AG04450 (cell line): ENCODE measurements at regions of chr13 and their contacts with region 1.

Region 1: GRCh38 chr13:113562085-113562749 is 22.3 kb upstream of the TFDP1 start:
- DNase-seq: peak; percentile 48
- H3K4me3 ChIP-seq: no peak overlapping the region
- H3K27ac ChIP-seq: no peak overlapping the region
- H3K27me3 ChIP-seq: peaks cover 19% of the 10 kb centered on the region
- CTCF ChIP-seq: peak; percentile 91

Region 2: DNA sequence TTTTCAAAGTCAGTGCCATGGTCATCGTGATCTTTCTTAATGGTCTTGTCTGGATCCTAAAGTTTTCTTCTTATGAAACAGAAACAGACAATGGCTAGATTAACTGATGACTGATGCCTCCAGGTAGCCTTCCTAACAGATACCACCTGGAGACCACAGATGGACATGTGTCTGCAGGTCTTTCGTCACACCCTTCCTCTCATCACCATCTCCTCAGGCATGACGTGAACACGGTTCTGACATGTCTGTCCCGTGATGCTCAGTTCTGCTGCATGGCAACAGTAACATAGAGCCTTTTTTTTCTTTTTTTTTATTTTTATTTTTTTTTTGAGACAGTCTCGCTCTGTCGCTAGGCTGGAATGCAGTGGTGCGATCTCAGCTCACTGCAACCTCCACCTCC is 278.3 kb before region 1 on chr13:
- CTCF ChIA-PET with region 1: no interaction called
- POLR2A ChIA-PET with region 1: no interaction called
- DNase-seq: no peak
- H3K4me3 ChIP-seq: no peak overlapping the region
- H3K27ac ChIP-seq: no peak overlapping the region
- H3K27me3 ChIP-seq: peaks cover 12% of the 10 kb centered on the region
- CTCF ChIP-seq: no peak

Region 3: GRCh38 chr13:113458253-113459065 is 103.8 kb before region 1 on chr13:
- CTCF ChIA-PET with region 1: interaction called, 54 read pairs
- POLR2A ChIA-PET with region 1: no interaction called
- DNase-seq: peak; percentile 13
- H3K4me3 ChIP-seq: no peak overlapping the region
- H3K27ac ChIP-seq: peak overlapping the region; percentile 47
- H3K27me3 ChIP-seq: no peaks in the 10 kb centered on the region
- CTCF ChIP-seq: peak; percentile 64

Region 4: GRCh38 chr13:113532156-113532806 is 29.9 kb before region 1 on chr13:
- CTCF ChIA-PET with region 1: interaction called, 10 read pairs
- POLR2A ChIA-PET with region 1: no interaction called
- DNase-seq: no peak
- H3K4me3 ChIP-seq: no peak overlapping the region
- H3K27ac ChIP-seq: peak overlapping the region; percentile 21
- H3K27me3 ChIP-seq: no peaks in the 10 kb centered on the region
- CTCF ChIP-seq: no peak

Region 5: DNA sequence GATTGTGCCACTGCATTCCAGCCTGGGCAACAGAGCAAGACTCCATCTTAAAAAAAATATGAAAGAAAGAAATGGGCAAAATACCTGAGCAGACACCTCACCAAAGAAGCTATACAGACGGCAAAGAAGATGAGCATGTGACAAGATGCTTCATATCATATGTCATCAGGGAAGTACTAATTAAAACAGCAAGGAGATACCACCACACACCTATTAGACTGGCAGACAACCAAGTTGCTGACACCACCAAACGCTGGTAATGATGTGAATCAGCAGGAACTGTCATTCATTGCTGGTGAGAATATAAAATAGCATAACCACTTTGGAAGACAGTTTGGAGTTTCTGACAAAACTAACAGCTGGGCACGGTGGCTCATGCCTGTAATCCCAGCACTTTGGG is 10.8 kb after region 1 on chr13:
- CTCF ChIA-PET with region 1: interaction called, 14 read pairs
- POLR2A ChIA-PET with region 1: no interaction called
- DNase-seq: no peak
- H3K4me3 ChIP-seq: no peak overlapping the region
- H3K27ac ChIP-seq: no peak overlapping the region
- H3K27me3 ChIP-seq: peaks cover 5% of the 10 kb centered on the region
- CTCF ChIP-seq: no peak